ENCODE measurements at regions of chr4 and their contacts with region 1.

Region 1: GRCh38 chr4:89184407-89184806 is 73.1 kb downstream of the TIGD2 start:
- DNase-seq: no peak
- H3K4me3 ChIP-seq: no peak overlapping the region
- H3K27ac ChIP-seq: no peak overlapping the region
- H3K4me1 ChIP-seq: no peaks in the 10 kb centered on the region
- H3K27me3 ChIP-seq: no peaks in the 10 kb centered on the region
- CTCF ChIP-seq: no peak
- EP300 ChIP-seq: no peak
- POLR2A ChIP-seq: no peak

Region 2: GRCh38 chr4:89218587-89218986 is 34.2 kb after region 1 on chr4:
- intact Hi-C with region 1: loop called in 1 of 4 experiments (anchors 2 kb)
- DNase-seq: no peak
- H3K4me3 ChIP-seq: no peak overlapping the region
- H3K27ac ChIP-seq: no peak overlapping the region
- H3K4me1 ChIP-seq: no peaks in the 10 kb centered on the region
- H3K27me3 ChIP-seq: no peaks in the 10 kb centered on the region
- CTCF ChIP-seq: no peak
- EP300 ChIP-seq: no peak
- POLR2A ChIP-seq: no peak

Measured in ovary (tissue), 10 donors.